ENCODE measurements at regions of chrX and their contacts with region 1.

Region 1: DNA sequence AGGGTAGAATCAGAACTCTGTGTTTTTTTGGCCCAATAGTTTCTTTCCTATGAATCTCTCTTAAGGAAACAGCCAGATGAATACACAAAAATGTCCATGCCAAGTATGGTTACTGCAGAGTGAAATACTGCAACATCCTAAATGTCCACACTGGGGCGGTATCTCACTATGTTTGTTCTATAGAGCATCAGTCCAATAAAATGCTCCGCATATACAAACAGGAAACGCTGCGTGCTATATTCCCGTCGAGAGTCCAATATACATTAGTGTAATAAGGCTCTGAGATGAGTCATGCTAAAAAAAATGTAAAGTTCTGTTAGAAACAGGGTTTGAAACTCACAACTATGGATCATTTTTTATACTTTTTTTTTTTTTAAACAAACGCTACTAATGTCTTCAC is 72.9 kb upstream of the ENOX2 start:
- DNase-seq: peak in 4 of 5 donors; percentile 12 to 31 (median 14)
- H3K4me3 ChIP-seq: no peak overlapping the region
- H3K4me3 Mint-ChIP-seq: peak overlapping the region in 1 of 8 donors; percentile 20
- H3K27ac ChIP-seq: no peak overlapping the region
- H3K27ac Mint-ChIP-seq: no peak overlapping the region
- H3K4me1 ChIP-seq: no peaks in the 10 kb centered on the region
- H3K4me1 Mint-ChIP-seq: peaks cover 0 to 2% (median 0%) of the 10 kb centered on the region in 4 donors
- H3K27me3 ChIP-seq: no peaks in the 10 kb centered on the region
- H3K27me3 Mint-ChIP-seq: no peaks in the 10 kb centered on the region

Region 2: DNA sequence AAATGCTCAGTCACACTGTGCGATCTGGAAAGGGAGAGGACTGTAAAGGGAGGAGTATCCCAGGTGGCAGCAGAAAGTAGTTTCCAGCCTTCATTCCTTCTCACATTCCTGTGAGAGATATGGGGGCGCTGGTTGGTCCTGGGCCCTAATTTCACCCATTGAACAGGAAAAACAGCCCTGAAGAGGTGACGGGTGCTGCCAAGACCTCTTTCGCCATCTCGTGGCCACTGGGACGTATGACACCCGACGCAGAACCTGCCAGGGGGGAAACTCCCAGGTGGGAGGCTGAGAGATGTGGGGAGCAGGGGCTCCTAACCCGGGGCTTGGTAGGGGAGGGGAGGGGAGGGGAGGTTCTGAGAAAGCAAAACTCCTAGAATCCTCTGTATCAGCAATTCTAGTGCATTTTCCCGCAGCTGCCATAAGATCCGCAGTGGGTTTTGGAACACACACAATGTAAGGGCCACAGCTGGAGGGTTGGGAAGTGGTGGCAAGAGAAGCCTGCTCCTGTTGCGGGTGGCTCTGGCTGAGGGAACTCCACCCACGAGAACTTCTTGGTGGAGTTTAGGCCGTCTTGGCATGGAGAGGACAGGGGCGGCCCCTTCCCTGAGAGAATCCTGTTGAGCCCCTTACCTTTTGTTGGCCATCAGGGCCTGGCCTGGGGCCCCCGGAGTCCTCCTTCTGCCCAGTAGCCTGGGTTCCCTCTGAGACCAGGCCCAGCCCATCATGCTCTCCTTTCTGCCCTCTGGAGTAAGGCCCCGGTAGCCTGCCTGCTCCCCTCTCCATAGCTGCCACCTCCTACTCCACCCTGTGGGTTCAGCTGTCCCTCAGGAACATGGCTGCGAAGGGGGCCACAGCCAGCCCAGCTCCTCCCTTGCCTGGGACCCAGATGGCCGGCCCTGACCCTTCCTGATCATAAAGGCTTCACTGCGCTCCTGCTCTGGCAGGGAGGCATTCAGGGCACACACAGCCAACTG is 702.0 kb after region 1 on chrX:
- CTCF ChIA-PET with region 1: interaction called, 6 read pairs
- POLR2A ChIA-PET with region 1: no interaction called
- intact Hi-C with region 1: loop called (anchors 5 kb)
- DNase-seq: peak; percentile 21 to 37 (median 33)
- H3K4me3 ChIP-seq: no peak overlapping the region
- H3K4me3 Mint-ChIP-seq: no peak overlapping the region
- H3K27ac ChIP-seq: no peak overlapping the region
- H3K27ac Mint-ChIP-seq: peak overlapping the region in 1 of 7 donors; percentile 38
- H3K4me1 ChIP-seq: no peaks in the 10 kb centered on the region
- H3K4me1 Mint-ChIP-seq: peaks cover 0 to 2% (median 0%) of the 10 kb centered on the region in 4 donors
- H3K27me3 ChIP-seq: no peaks in the 10 kb centered on the region
- H3K27me3 Mint-ChIP-seq: no peaks in the 10 kb centered on the region

Region 3: GRCh38 chrX:131802835-131803626 is 827.1 kb after region 1 on chrX:
- CTCF ChIA-PET with region 1: no interaction called
- POLR2A ChIA-PET with region 1: no interaction called
- intact Hi-C with region 1: loop called (anchors 2 kb)
- DNase-seq: peak; percentile 33 to 85 (median 83)
- H3K4me3 ChIP-seq: no peak overlapping the region
- H3K4me3 Mint-ChIP-seq: peak overlapping the region in 7 of 8 donors; percentile 26 to 92 (median 89)
- H3K27ac ChIP-seq: no peak overlapping the region
- H3K27ac Mint-ChIP-seq: peak overlapping the region in 5 of 7 donors; percentile 22 to 87 (median 69)
- H3K4me1 ChIP-seq: no peaks in the 10 kb centered on the region
- H3K4me1 Mint-ChIP-seq: peaks cover 0 to 17% (median 2%) of the 10 kb centered on the region in 4 donors
- H3K27me3 ChIP-seq: no peaks in the 10 kb centered on the region
- H3K27me3 Mint-ChIP-seq: no peaks in the 10 kb centered on the region

Measured in CD4-positive, alpha-beta memory T cell (primary cell).